B cell (primary cell): ENCODE measurements at regions of chr19 and their contacts with region 1.

Region 1: GRCh38 chr19:19554074-19555023 is 16.3 kb downstream of the CILP2 start:
- DNase-seq: peak; percentile 61
- ATAC-seq: peak; percentile 53
- H3K4me3 ChIP-seq: no peak overlapping the region
- H3K4me3 Mint-ChIP-seq: no peak overlapping the region
- H3K27ac ChIP-seq: no peak overlapping the region
- H3K27ac Mint-ChIP-seq: no peak overlapping the region
- H3K4me1 ChIP-seq: peaks cover 0 to 2% of the 10 kb centered on the region in 2 donors
- H3K4me1 Mint-ChIP-seq: no peaks in the 10 kb centered on the region
- H3K27me3 ChIP-seq: peaks cover 0 to 4% (median 0%) of the 10 kb centered on the region in 4 experiments
- H3K27me3 Mint-ChIP-seq: peaks cover 4% of the 10 kb centered on the region
- CTCF ChIP-seq: peak; percentile 79

Region 2: GRCh38 chr19:19531951-19532805 is 22.2 kb before region 1 on chr19:
- CTCF ChIA-PET with region 1: interaction called, 17 read pairs
- POLR2A ChIA-PET with region 1: no interaction called
- intact Hi-C with region 1: no loop called
- DNase-seq: peak; percentile 87
- ATAC-seq: peak; percentile 78
- H3K4me3 ChIP-seq: no peak overlapping the region
- H3K4me3 Mint-ChIP-seq: no peak overlapping the region
- H3K27ac ChIP-seq: no peak overlapping the region
- H3K27ac Mint-ChIP-seq: peak overlapping the region; percentile 86
- H3K4me1 ChIP-seq: peaks cover 7 to 9% of the 10 kb centered on the region in 2 donors
- H3K4me1 Mint-ChIP-seq: peaks cover 6% of the 10 kb centered on the region
- H3K27me3 ChIP-seq: peaks cover 0 to 1% (median 0%) of the 10 kb centered on the region in 4 experiments
- H3K27me3 Mint-ChIP-seq: no peaks in the 10 kb centered on the region
- CTCF ChIP-seq: peak; percentile 95